ENCODE measurements at regions of chr5 and their contacts with region 1.

Region 1: DNA sequence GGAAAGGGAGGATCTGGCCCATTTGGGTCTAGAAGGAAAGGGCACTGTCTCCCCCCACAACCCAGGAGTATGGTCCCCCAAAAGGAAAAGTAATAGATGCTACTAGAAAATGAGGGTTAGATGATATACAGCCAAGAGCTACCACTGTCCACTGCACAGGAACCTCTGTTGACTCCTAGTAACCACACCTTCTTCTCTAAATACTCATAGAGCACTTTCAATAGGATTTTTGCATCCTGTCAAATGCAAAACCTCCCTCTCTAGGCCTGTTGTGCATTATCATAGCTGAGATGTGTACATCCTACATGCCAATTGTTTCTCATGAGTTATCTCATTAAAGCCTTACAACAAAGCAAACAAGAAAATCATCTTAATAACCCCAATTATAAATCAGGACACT is 66.8 kb downstream of the THBS4 start:
- DNase-seq: no peak
- ATAC-seq: peak; percentile 80
- H3K4me3 ChIP-seq: no peak overlapping the region
- H3K27ac ChIP-seq: no peak overlapping the region
- H3K4me1 ChIP-seq: peaks cover 3% of the 10 kb centered on the region; the same call in 1 of the 2 replicates
- H3K27me3 ChIP-seq: no peaks in the 10 kb centered on the region
- CTCF ChIP-seq: no peak
- EP300 ChIP-seq: no peak
- POLR2A ChIP-seq: no peak
- RAD21 ChIP-seq: no peak

Region 2: GRCh38 chr5:80275347-80275746 is 173.4 kb after region 1 on chr5:
- CTCF ChIA-PET with region 1: interaction called, 168 read pairs
- POLR2A ChIA-PET with region 1: no interaction called
- RAD21 ChIA-PET with region 1: interaction called, 4 read pairs
- SMC1A ChIA-PET with region 1: interaction called, 13 read pairs
- in situ Hi-C with region 1: no loop called
- intact Hi-C with region 1: no loop called
- DNase-seq: no peak
- ATAC-seq: peak; percentile 80
- H3K4me3 ChIP-seq: no peak overlapping the region
- H3K27ac ChIP-seq: no peak overlapping the region
- H3K4me1 ChIP-seq: no peaks in the 10 kb centered on the region
- H3K27me3 ChIP-seq: no peaks in the 10 kb centered on the region
- CTCF ChIP-seq: peak; percentile 52 to 73 (median 60); a peak in 4 of 6 replicates
- EP300 ChIP-seq: no peak
- POLR2A ChIP-seq: no peak
- RAD21 ChIP-seq: peak; percentile 92